Activated naive CD4-positive, alpha-beta T cell treated with anti-CD3 and anti-CD28 coated beads, Interleukin-2, amount 10 ng/mL, durations not matched to agents 7 days and 5 days (primary cell): ENCODE measurements at regions of chr15 and their contacts with region 1.

Region 1: GRCh38 chr15:77179541-77179998 is 108.7 kb upstream of the TSPAN3 start:
- DNase-seq: peak; percentile 38
- H3K4me3 Mint-ChIP-seq: no peak overlapping the region
- H3K27ac Mint-ChIP-seq: peak overlapping the region; percentile 89
- H3K4me1 Mint-ChIP-seq: peaks cover 53% of the 10 kb centered on the region
- H3K27me3 Mint-ChIP-seq: no peaks in the 10 kb centered on the region

Region 2: DNA sequence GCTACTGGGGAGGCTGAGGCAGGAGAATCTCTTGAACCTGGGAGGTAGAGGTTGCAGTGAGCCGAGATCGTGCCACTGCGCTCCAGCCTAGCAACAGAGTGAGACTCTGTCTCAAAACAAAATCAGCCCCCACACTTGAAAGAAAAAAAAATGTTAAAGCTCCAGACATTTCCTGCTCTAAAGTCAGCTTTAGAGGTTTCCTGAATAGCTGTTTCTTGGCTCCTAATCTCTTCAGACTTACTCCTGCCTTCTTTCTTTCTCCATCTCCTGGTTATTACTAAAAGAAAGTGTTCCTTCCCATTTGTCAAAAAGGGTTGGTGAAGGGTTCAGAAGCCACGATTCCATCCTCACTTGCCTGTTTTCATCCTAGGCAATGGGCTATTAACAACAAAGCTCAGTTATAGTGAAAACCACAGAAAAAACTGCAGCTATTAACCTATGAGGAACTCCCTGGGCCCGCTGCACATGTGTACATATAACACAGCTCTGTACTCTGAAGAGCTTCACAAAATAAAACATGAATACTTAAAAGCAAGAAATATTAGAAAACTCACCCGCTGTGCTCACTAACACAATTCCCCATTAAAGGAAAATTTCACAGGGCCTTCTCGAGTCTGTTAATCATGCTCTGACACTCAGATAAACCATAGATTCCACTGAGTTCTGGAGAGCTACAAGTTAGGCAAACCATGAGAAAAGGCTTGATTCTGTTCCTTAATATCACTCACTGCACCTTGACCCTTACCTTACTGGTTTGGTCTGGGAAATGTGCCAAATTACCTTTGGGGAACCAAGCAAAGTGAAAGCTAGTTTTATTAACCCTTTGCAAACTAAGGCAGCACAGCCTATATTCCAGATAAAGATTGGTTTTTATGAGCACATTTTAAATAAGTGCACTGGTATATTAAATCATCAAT is 18.8 kb before region 1 on chr15:
- CTCF ChIA-PET with region 1: interaction called, 10 read pairs
- DNase-seq: no peak
- H3K4me3 Mint-ChIP-seq: no peak overlapping the region
- H3K27ac Mint-ChIP-seq: peak overlapping the region; percentile 77
- H3K4me1 Mint-ChIP-seq: peaks cover 39% of the 10 kb centered on the region
- H3K27me3 Mint-ChIP-seq: no peaks in the 10 kb centered on the region